AG04450 (cell line): ENCODE measurements at regions of chr19 and their contacts with region 1.

Region 1: GRCh38 chr19:29610563-29611271 is 4.6 kb downstream of the POP4 start:
- DNase-seq: peak; percentile 63
- H3K4me3 ChIP-seq: no peak overlapping the region
- H3K27ac ChIP-seq: no peak overlapping the region
- H3K27me3 ChIP-seq: no peaks in the 10 kb centered on the region
- CTCF ChIP-seq: peak; percentile 91

Region 2: GRCh38 chr19:29587518-29587986 is 23.2 kb before region 1 on chr19:
- CTCF ChIA-PET with region 1: no interaction called
- POLR2A ChIA-PET with region 1: no interaction called
- DNase-seq: no peak
- H3K4me3 ChIP-seq: no peak overlapping the region
- H3K27ac ChIP-seq: no peak overlapping the region
- H3K27me3 ChIP-seq: peaks cover 2% of the 10 kb centered on the region
- CTCF ChIP-seq: no peak

Region 3: DNA sequence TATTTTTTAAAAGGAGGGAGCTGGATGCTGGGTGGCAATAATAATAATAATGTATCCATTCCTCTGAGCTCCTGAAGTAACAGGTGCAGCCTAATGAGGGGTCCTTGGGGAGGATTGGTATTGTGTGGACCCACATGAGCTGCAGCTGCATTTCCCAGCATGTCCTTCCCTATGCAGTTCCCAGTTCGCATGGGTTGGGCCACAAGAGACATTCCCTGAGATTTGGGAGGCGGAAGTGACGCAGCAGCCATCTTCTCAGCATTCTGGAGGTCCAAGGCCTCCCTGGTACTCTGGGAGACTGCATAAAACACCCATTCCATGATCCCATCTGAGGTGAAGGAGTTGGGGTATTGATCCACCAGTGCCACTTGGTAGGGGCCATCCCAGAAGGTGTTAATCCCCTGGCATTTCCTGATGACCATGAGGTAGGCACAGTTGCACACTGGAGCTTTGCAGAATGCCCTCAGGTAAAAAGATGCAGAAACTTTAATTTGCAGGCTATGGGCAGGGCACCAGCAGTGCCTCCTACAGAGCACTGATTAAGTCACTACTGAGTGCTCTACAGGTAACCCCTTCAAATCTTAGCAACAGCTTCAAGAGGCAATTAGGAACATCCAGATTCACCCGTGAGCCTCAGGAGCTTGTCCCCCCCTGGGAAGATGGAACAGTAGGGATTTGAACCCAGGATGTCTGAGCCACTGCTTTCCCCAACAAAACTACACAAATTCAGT is 20.8 kb after region 1 on chr19:
- CTCF ChIA-PET with region 1: interaction called, 10 read pairs
- POLR2A ChIA-PET with region 1: interaction called, 3 read pairs
- DNase-seq: no peak
- H3K4me3 ChIP-seq: no peak overlapping the region
- H3K27ac ChIP-seq: no peak overlapping the region
- H3K27me3 ChIP-seq: peaks cover 4% of the 10 kb centered on the region
- CTCF ChIP-seq: no peak

Region 4: GRCh38 chr19:29665215-29665825 is 54.6 kb after region 1 on chr19 and contains the start of gene PLEKHF1:
- CTCF ChIA-PET with region 1: interaction called, 36 read pairs
- POLR2A ChIA-PET with region 1: interaction called, 12 read pairs
- DNase-seq: no peak
- H3K4me3 ChIP-seq: peak within 1 kb of the TSS; percentile 81
- H3K27ac ChIP-seq: peak within 1 kb of the TSS; percentile 81
- H3K27me3 ChIP-seq: no peaks in the 10 kb centered on the region
- CTCF ChIP-seq: no peak
- polyA plus RNA-seq, gene PLEKHF1: 5.4 and 6.4 TPM in 2 replicates

Region 5: GRCh38 chr19:29685326-29685725 is 74.6 kb after region 1 on chr19:
- CTCF ChIA-PET with region 1: interaction called, 13 read pairs
- POLR2A ChIA-PET with region 1: interaction called, 3 read pairs
- DNase-seq: no peak
- H3K4me3 ChIP-seq: no peak overlapping the region
- H3K27ac ChIP-seq: no peak overlapping the region
- H3K27me3 ChIP-seq: no peaks in the 10 kb centered on the region
- CTCF ChIP-seq: no peak

Region 6: GRCh38 chr19:29708554-29709439 is 98.1 kb after region 1 on chr19:
- CTCF ChIA-PET with region 1: interaction called, 550 read pairs
- POLR2A ChIA-PET with region 1: no interaction called
- DNase-seq: no peak
- H3K4me3 ChIP-seq: no peak overlapping the region
- H3K27ac ChIP-seq: no peak overlapping the region
- H3K27me3 ChIP-seq: no peaks in the 10 kb centered on the region
- CTCF ChIP-seq: no peak